Dendritic cell treated with granulocyte-macrophage colony-stimulating factor and Interleukin-4, amounts not matched to agents 40 ng/mL and 50 ng/mL, for 4 days (primary cell): ENCODE measurements at regions of chr7 and their contacts with region 1.

Region 1: GRCh38 chr7:100360135-100360854 is 2.4 kb downstream of the PILRB start:
- H3K4me3 Mint-ChIP-seq: no peak overlapping the region
- H3K27ac Mint-ChIP-seq: no peak overlapping the region
- H3K4me1 Mint-ChIP-seq: peaks cover 48% of the 10 kb centered on the region
- H3K27me3 Mint-ChIP-seq: no peaks in the 10 kb centered on the region

Region 2: GRCh38 chr7:99558306-99559174 is 801.8 kb before region 1 on chr7 and contains the start of gene ZNF655:
- intact Hi-C with region 1: no loop called
- H3K4me3 Mint-ChIP-seq: peak within 1 kb of the TSS; percentile 96
- H3K27ac Mint-ChIP-seq: peak within 1 kb of the TSS; percentile 93
- H3K4me1 Mint-ChIP-seq: peaks cover 47% of the 10 kb centered on the region
- H3K27me3 Mint-ChIP-seq: no peaks in the 10 kb centered on the region

Region 3: GRCh38 chr7:100407285-100408180 is 47.2 kb after region 1 on chr7:
- intact Hi-C with region 1: loop called (anchors 5 kb)
- H3K4me3 Mint-ChIP-seq: no peak overlapping the region
- H3K27ac Mint-ChIP-seq: no peak overlapping the region
- H3K4me1 Mint-ChIP-seq: peaks cover 17% of the 10 kb centered on the region
- H3K27me3 Mint-ChIP-seq: no peaks in the 10 kb centered on the region